ENCODE measurements at regions of chr10 and their contacts with region 1.

Region 1: DNA sequence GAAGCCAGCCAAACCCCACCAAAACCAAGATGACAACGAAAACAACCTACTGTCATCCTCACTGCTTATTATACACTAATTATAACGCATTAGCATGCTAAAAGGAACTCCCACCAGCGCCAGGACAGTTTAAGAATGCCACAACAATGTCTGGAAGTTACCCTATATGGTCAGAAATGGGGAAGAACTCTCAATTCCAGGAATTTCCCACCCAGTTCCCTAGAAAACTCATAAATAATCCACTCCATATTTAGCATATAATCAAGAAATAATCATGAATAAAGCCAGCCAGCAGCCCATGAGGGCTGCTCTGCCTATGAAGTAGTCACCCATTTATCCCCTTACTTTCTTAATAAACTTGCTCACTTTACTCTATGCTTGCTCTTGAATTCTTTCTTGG is 20.8 kb downstream of the MICU1 start:
- DNase-seq: no peak
- H3K4me3 ChIP-seq: no peak overlapping the region
- H3K27ac ChIP-seq: no peak overlapping the region
- H3K4me1 ChIP-seq: peaks cover 8% of the 10 kb centered on the region
- H3K27me3 ChIP-seq: no peaks in the 10 kb centered on the region
- CTCF ChIP-seq: no peak
- POLR2A ChIP-seq: no peak

Region 2: DNA sequence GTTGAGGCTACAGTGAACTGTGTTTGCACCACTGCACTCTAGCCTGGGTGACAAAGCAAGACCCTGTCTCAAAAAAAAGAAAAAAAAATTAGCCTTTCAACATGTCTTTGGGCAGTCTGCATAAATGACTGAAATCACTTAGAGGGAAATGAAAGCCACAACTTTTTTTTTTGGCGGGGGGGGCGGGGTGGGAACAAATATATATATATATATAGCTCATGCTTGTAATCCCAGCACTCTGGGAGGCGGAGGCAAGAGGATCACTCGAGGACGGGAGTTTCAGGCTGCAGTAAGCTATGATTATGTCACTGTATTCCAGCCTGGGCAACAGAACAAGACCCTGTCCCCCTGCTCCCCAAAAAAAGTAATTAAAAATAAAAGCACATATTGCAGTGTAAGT is 44.2 kb after region 1 on chr10:
- intact Hi-C with region 1: no loop called
- DNase-seq: no peak
- H3K4me3 ChIP-seq: no peak overlapping the region
- H3K27ac ChIP-seq: no peak overlapping the region
- H3K4me1 ChIP-seq: no peaks in the 10 kb centered on the region
- H3K27me3 ChIP-seq: no peaks in the 10 kb centered on the region
- CTCF ChIP-seq: no peak
- POLR2A ChIP-seq: no peak

Region 3: GRCh38 chr10:73786512-73786885 is 1181.4 kb after region 1 on chr10:
- intact Hi-C with region 1: no loop called
- DNase-seq: no peak
- H3K4me3 ChIP-seq: peak overlapping the region; percentile 64 to 92
- H3K27ac ChIP-seq: peak overlapping the region; percentile 81
- H3K4me1 ChIP-seq: peaks cover 47% of the 10 kb centered on the region
- H3K27me3 ChIP-seq: no peaks in the 10 kb centered on the region
- CTCF ChIP-seq: no peak
- POLR2A ChIP-seq: no peak

Region 4: GRCh38 chr10:74021248-74022055 is 1416.3 kb after region 1 on chr10:
- intact Hi-C with region 1: loop called (anchors 10 kb)
- DNase-seq: no peak
- H3K4me3 ChIP-seq: no peak overlapping the region
- H3K27ac ChIP-seq: no peak overlapping the region
- H3K4me1 ChIP-seq: peaks cover 38% of the 10 kb centered on the region
- H3K27me3 ChIP-seq: no peaks in the 10 kb centered on the region
- CTCF ChIP-seq: no peak
- POLR2A ChIP-seq: no peak

Measured in vagina (tissue), 2 donors.